ENCODE measurements at regions of chr11 and their contacts with region 1.

Region 1: GRCh38 chr11:1468002-1468401 is 18.6 kb downstream of the MOB2 start:
- DNase-seq: no peak
- H3K4me3 ChIP-seq: no peak overlapping the region
- H3K27ac ChIP-seq: no peak overlapping the region
- H3K4me1 ChIP-seq: no peaks in the 10 kb centered on the region; a peak in 1 of 7 replicates
- H3K27me3 ChIP-seq: no peaks in the 10 kb centered on the region
- CTCF ChIP-seq: no peak
- EP300 ChIP-seq: no peak
- POLR2A ChIP-seq: no peak
- RAD21 ChIP-seq: no peak

Region 2: GRCh38 chr11:1453611-1454034 is 14.4 kb before region 1 on chr11:
- CTCF ChIA-PET with region 1: interaction called, 13 read pairs
- POLR2A ChIA-PET with region 1: interaction called, 7 read pairs
- DNase-seq: peak; percentile 17 to 74
- H3K4me3 ChIP-seq: no peak overlapping the region
- H3K27ac ChIP-seq: no peak overlapping the region
- H3K4me1 ChIP-seq: peaks cover 0 to 5% (median under 1%) of the 10 kb centered on the region in 4 experiments; a peak in 1 of 7 replicates
- H3K27me3 ChIP-seq: no peaks in the 10 kb centered on the region
- CTCF ChIP-seq: peak in 2 of 3 experiments; percentile 51 to 56; a peak in 3 of 4 replicates
- EP300 ChIP-seq: no peak
- POLR2A ChIP-seq: no peak
- RAD21 ChIP-seq: peak; percentile 33 to 51

Region 3: DNA sequence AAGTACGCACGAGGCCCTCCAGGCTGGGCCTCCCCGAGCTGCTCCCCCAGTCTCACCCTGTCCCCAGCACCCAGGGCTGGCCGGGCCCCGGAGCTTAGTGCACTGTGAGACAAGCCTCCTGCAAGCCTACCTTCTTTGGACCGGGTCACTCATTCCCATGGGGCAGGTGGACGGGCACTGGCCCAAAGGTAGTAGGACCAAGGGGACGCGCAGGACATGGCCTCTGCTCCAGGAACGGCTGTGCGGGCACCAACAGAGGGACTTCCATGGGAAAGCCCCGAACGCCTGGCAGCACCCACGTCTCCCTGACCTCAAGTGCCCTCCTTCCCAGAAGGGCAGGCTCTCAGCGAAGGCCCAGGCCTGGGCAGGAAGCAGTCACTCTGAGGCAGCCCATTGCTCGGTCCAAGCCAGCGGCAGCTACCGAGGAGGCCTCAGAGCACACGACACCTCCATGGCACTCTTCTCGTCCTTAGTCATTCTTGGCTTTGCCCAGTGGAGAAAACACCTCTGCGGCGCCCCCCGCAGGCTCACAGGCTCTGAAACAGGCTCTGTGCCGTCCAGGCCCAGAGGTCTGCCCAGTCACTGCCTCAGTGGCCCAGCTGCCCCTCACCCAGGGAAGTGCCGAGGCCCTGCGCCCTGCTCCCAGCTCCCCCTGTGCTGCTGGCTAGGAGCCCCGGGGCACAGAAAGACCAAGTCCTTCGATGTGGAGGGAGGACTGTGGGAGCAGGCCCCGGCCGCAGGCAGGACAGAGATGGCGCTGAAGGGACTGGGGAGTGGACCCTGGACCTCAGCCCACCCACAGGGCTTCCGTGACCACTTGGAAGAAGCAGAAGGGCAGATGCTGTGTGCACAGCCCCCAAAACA is 14.8 kb after region 1 on chr11:
- CTCF ChIA-PET with region 1: interaction called, 34 read pairs
- POLR2A ChIA-PET with region 1: no interaction called
- DNase-seq: no peak
- H3K4me3 ChIP-seq: no peak overlapping the region
- H3K27ac ChIP-seq: no peak overlapping the region
- H3K4me1 ChIP-seq: peaks cover 0 to 5% (median under 1%) of the 10 kb centered on the region in 4 experiments; a peak in 2 of 7 replicates
- H3K27me3 ChIP-seq: no peaks in the 10 kb centered on the region
- CTCF ChIP-seq: peak in 2 of 3 experiments; percentile 46 to 51; a peak in 2 of 4 replicates
- EP300 ChIP-seq: no peak
- POLR2A ChIP-seq: no peak
- RAD21 ChIP-seq: peak; percentile 32 to 43; a peak in 3 of 4 replicates

Measured in H1 (cell line).